ENCODE measurements at regions of chr17 and their contacts with region 1.

Region 1: DNA sequence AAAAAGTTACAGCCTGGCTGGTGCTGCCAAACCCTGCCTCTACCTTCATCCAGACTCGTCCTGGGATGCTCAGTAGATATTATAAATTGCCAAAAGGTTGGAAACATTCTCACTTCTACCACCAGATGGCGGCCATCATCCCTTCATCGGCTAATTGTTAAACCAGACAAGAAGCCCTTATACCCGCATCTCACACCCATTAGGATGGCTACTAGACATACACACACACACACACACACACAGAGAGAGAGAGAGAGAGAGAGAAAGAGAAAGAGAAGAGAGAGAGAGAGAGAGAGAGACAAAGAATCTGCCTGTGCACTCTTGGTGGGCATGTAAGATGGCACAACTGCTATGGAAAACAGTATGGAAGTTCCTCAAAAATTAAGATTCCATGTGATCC is 15.0 kb upstream of the SCIMP start:
- DNase-seq: peak; percentile 30 to 87 (median 64)
- ATAC-seq: peak; percentile 97
- H3K4me3 ChIP-seq: no peak overlapping the region
- H3K4me3 Mint-ChIP-seq: no peak overlapping the region
- H3K27ac ChIP-seq: no peak overlapping the region
- H3K27ac Mint-ChIP-seq: peak overlapping the region; percentile 76
- H3K4me1 ChIP-seq: peaks cover 2% of the 10 kb centered on the region
- H3K4me1 Mint-ChIP-seq: peaks cover 10% of the 10 kb centered on the region
- H3K27me3 ChIP-seq: no peaks in the 10 kb centered on the region
- H3K27me3 Mint-ChIP-seq: no peaks in the 10 kb centered on the region
- CTCF ChIP-seq: peak; percentile 60

Region 2: GRCh38 chr17:5198472-5198871 is 51.1 kb before region 1 on chr17:
- CTCF ChIA-PET with region 1: interaction called, 18 read pairs
- POLR2A ChIA-PET with region 1: interaction called, 4 read pairs
- intact Hi-C with region 1: loop called in 1 of 2 experiments (anchors 5 kb)
- DNase-seq: peak in 3 of 9 experiments; percentile 22 to 57 (median 43)
- ATAC-seq: peak; percentile 30
- H3K4me3 ChIP-seq: no peak overlapping the region
- H3K4me3 Mint-ChIP-seq: no peak overlapping the region
- H3K27ac ChIP-seq: peak overlapping the region in 1 of 2 experiments; percentile 50
- H3K27ac Mint-ChIP-seq: peak overlapping the region; percentile 79
- H3K4me1 ChIP-seq: peaks cover 6% of the 10 kb centered on the region
- H3K4me1 Mint-ChIP-seq: peaks cover 17% of the 10 kb centered on the region
- H3K27me3 ChIP-seq: no peaks in the 10 kb centered on the region
- H3K27me3 Mint-ChIP-seq: no peaks in the 10 kb centered on the region
- CTCF ChIP-seq: no peak

Region 3: GRCh38 chr17:5237541-5238016 is 12.0 kb before region 1 on chr17:
- CTCF ChIA-PET with region 1: interaction called, 15 read pairs
- POLR2A ChIA-PET with region 1: no interaction called
- intact Hi-C with region 1: no loop called
- DNase-seq: peak in 7 of 9 experiments; percentile 31 to 77 (median 45)
- ATAC-seq: peak; percentile 44
- H3K4me3 ChIP-seq: no peak overlapping the region
- H3K4me3 Mint-ChIP-seq: no peak overlapping the region
- H3K27ac ChIP-seq: peak overlapping the region; percentile 1 to 78
- H3K27ac Mint-ChIP-seq: peak overlapping the region; percentile 74
- H3K4me1 ChIP-seq: peaks cover 32% of the 10 kb centered on the region
- H3K4me1 Mint-ChIP-seq: peaks cover 53% of the 10 kb centered on the region
- H3K27me3 ChIP-seq: no peaks in the 10 kb centered on the region
- H3K27me3 Mint-ChIP-seq: no peaks in the 10 kb centered on the region
- CTCF ChIP-seq: peak; percentile 35

Region 4: GRCh38 chr17:5304636-5305035 is 55.0 kb after region 1 on chr17:
- CTCF ChIA-PET with region 1: interaction called, 6 read pairs
- POLR2A ChIA-PET with region 1: no interaction called
- intact Hi-C with region 1: loop called (anchors 1 kb)
- DNase-seq: no peak
- ATAC-seq: no peak
- H3K4me3 ChIP-seq: no peak overlapping the region
- H3K4me3 Mint-ChIP-seq: no peak overlapping the region
- H3K27ac ChIP-seq: no peak overlapping the region
- H3K27ac Mint-ChIP-seq: no peak overlapping the region
- H3K4me1 ChIP-seq: no peaks in the 10 kb centered on the region
- H3K4me1 Mint-ChIP-seq: peaks cover 50% of the 10 kb centered on the region
- H3K27me3 ChIP-seq: no peaks in the 10 kb centered on the region
- H3K27me3 Mint-ChIP-seq: no peaks in the 10 kb centered on the region
- CTCF ChIP-seq: no peak

Region 5: DNA sequence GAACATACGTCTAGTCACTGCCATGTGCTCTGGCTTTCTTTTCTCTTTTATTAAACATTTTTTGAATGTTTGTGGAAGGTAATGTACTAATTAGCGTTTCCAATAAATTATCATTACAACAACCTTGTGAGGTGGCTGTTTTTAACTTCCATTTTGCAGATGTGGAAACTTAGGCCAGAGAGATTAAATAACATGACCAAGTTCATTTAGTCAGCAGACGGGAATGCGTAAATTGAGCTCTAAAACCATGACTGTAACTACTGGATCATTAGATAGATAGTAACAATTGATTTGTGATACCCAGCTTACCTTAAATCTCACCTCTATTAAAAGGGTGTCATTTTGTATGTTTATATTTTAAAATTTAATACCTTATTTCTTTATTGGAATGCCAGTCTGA is 81.9 kb after region 1 on chr17:
- CTCF ChIA-PET with region 1: interaction called, 10 read pairs
- POLR2A ChIA-PET with region 1: no interaction called
- intact Hi-C with region 1: no loop called
- DNase-seq: no peak
- ATAC-seq: no peak
- H3K4me3 ChIP-seq: no peak overlapping the region
- H3K4me3 Mint-ChIP-seq: no peak overlapping the region
- H3K27ac ChIP-seq: no peak overlapping the region
- H3K27ac Mint-ChIP-seq: no peak overlapping the region
- H3K4me1 ChIP-seq: peaks cover 14% of the 10 kb centered on the region
- H3K4me1 Mint-ChIP-seq: peaks cover 40% of the 10 kb centered on the region
- H3K27me3 ChIP-seq: no peaks in the 10 kb centered on the region
- H3K27me3 Mint-ChIP-seq: no peaks in the 10 kb centered on the region
- CTCF ChIP-seq: no peak

Region 6: DNA sequence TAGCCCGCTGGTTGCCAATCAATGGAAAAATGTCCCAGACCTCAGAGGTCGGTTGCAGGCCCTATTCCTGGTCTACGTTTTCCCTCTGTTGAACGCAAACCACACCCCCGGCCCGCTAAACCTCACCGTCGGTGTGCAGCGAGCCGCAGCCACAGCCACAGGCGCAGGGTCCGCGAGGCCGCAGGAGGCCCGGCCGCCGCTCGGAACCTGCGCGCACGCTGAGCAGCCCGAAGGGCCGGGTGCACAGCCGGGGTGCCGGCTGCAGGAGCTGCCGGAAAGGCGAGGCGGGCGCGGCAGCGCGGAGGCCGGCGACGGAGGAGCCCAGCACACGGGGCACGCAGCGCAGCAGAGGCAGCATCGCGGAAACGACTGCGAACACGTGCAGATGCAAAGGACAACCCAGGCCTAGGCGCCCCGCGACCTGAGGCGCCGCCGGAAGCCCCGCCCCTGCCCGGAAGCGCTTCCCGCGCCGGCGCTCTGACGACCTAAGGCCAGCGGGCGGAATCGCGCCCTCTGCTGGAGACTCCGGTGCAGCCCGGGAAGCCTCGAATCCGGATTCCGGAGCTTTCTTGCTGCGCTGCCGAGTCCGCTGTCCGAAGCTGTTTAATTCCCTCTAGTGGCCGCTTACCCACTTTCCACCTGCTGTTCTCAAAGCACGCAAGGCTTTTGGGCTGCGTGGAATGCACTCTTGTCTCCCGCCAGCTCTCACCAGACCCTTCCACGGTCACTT is 189.3 kb after region 1 on chr17 and contains the start of gene C1QBP:
- CTCF ChIA-PET with region 1: interaction called, 9 read pairs
- POLR2A ChIA-PET with region 1: no interaction called
- intact Hi-C with region 1: loop called (anchors 1 kb)
- DNase-seq: peak; percentile 87 to 96 (median 91)
- ATAC-seq: peak; percentile 92
- H3K4me3 ChIP-seq: peak within 1 kb of the TSS; percentile 56 to 83
- H3K4me3 Mint-ChIP-seq: peak within 1 kb of the TSS; percentile 81
- H3K27ac ChIP-seq: peak within 1 kb of the TSS; percentile 63 to 86
- H3K27ac Mint-ChIP-seq: peak within 1 kb of the TSS; percentile 93
- H3K4me1 ChIP-seq: peaks cover 30% of the 10 kb centered on the region
- H3K4me1 Mint-ChIP-seq: peaks cover 40% of the 10 kb centered on the region
- H3K27me3 ChIP-seq: no peaks in the 10 kb centered on the region
- H3K27me3 Mint-ChIP-seq: no peaks in the 10 kb centered on the region
- CTCF ChIP-seq: peak; percentile 98
- total RNA-seq, gene C1QBP: 72.0 to 79.9 TPM

Measured in CD8-positive, alpha-beta T cell (primary cell).